Activated CD8-positive, alpha-beta T cell treated with anti-CD3 and anti-CD28 coated beads, Interleukin-2, amount 10 ng/mL, durations not matched to agents 7 days and 5 days (primary cell): ENCODE measurements at regions of chr14 and their contacts with region 1.

Region 1: GRCh38 chr14:52695481-52696091 is at the start of gene ERO1A:
- DNase-seq: peak; percentile 71
- ATAC-seq: peak; percentile 76
- H3K4me3 Mint-ChIP-seq: peak within 1 kb of the TSS; percentile 99
- H3K27ac Mint-ChIP-seq: peak within 1 kb of the TSS; percentile 99
- H3K4me1 Mint-ChIP-seq: peaks cover 38% of the 10 kb centered on the region
- H3K27me3 Mint-ChIP-seq: no peaks in the 10 kb centered on the region
- total RNA-seq, gene ERO1A: 198 to 200 TPM

Region 2: DNA sequence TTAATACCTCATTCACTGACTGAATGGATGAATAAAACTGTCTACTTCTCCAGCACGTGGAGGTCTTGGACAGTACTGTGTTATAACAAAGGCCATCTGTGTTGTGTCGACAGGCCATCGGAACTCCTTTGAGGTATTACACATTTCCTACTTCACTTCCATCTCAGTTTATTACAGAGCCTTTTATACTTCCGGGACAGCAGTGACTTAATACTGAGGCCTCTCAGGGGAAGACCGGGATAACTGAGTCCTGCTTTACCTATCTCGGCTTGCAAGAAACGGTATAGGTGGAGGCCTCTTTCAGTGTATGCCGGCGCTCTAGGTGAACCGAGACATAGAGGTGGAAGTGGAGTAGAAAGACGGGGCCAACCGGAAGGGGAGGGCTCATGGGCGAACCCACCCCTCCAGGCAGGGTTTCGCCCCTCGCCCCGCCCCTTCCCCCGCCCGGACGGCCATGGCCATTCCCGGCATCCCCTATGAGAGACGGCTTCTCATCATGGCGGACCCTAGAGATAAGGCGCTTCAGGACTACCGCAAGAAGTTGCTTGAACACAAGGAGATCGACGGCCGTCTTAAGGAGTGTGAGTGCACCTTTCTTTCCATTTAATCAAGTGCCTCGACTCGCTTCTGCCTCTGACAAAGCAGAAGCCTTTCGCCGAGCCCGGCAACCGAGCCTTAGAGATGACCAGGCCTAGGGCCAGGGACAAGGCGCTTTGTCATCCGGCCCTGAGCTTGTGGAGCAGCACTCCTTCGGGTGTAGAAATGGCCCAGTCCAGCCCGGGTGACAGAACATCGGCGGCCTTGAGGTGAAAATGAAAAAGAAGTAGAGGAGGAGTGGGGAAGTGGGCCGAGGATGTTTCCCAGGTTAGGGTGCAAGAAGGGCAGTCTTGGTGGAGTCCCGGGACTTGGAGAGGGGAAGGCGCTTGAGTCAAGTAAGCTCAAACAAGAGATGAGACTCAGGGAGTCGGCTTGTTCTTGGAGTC is 11.4 kb after region 1 on chr14 and contains the start of gene PSMC6:
- CTCF ChIA-PET with region 1: interaction called, 6 read pairs
- POLR2A ChIA-PET with region 1: interaction called, 29 read pairs
- DNase-seq: peak; percentile 97
- ATAC-seq: peak; percentile 96
- H3K4me3 Mint-ChIP-seq: peak within 1 kb of the TSS; percentile 96
- H3K27ac Mint-ChIP-seq: peak within 1 kb of the TSS; percentile 94
- H3K4me1 Mint-ChIP-seq: peaks cover 48% of the 10 kb centered on the region
- H3K27me3 Mint-ChIP-seq: no peaks in the 10 kb centered on the region
- total RNA-seq, gene PSMC6: 85.3 to 88.2 TPM

Region 3: GRCh38 chr14:52729925-52730667 is 34.5 kb after region 1 on chr14 and contains the start of gene STYX:
- CTCF ChIA-PET with region 1: interaction called, 4 read pairs
- POLR2A ChIA-PET with region 1: interaction called, 13 read pairs
- DNase-seq: peak; percentile 99
- ATAC-seq: peak; percentile 96
- H3K4me3 Mint-ChIP-seq: peak within 1 kb of the TSS; percentile 93
- H3K27ac Mint-ChIP-seq: peak within 1 kb of the TSS; percentile 89
- H3K4me1 Mint-ChIP-seq: peaks cover 41% of the 10 kb centered on the region
- H3K27me3 Mint-ChIP-seq: no peaks in the 10 kb centered on the region
- total RNA-seq, gene STYX: 19.9 to 21.9 TPM

Region 4: GRCh38 chr14:52741865-52742264 is 46.3 kb after region 1 on chr14:
- CTCF ChIA-PET with region 1: interaction called, 4 read pairs
- POLR2A ChIA-PET with region 1: interaction called, 17 read pairs
- DNase-seq: no peak
- ATAC-seq: peak; percentile 48
- H3K4me3 Mint-ChIP-seq: peak overlapping the region; percentile 57
- H3K27ac Mint-ChIP-seq: peak overlapping the region; percentile 82
- H3K4me1 Mint-ChIP-seq: peaks cover 57% of the 10 kb centered on the region
- H3K27me3 Mint-ChIP-seq: no peaks in the 10 kb centered on the region